Colonic mucosa (tissue), 4 donors: ENCODE measurements at regions of chr11 and their contacts with region 1.

Region 1: GRCh38 chr11:109486129-109486528 is 64.1 kb downstream of the C11orf87 start:
- DNase-seq: no peak
- H3K4me3 ChIP-seq: no peak overlapping the region
- H3K27ac ChIP-seq: no peak overlapping the region
- H3K4me1 ChIP-seq: no peaks in the 10 kb centered on the region
- H3K27me3 ChIP-seq: no peaks in the 10 kb centered on the region
- CTCF ChIP-seq: no peak

Region 2: GRCh38 chr11:109378034-109378433 is 108.1 kb before region 1 on chr11:
- intact Hi-C with region 1: no loop called
- DNase-seq: no peak
- H3K4me3 ChIP-seq: no peak overlapping the region
- H3K27ac ChIP-seq: no peak overlapping the region
- H3K4me1 ChIP-seq: no peaks in the 10 kb centered on the region
- H3K27me3 ChIP-seq: no peaks in the 10 kb centered on the region
- CTCF ChIP-seq: no peak

Region 3: GRCh38 chr11:109511598-109511997 is 25.5 kb after region 1 on chr11:
- intact Hi-C with region 1: loop called (anchors 2 kb)
- DNase-seq: no peak
- H3K4me3 ChIP-seq: no peak overlapping the region
- H3K27ac ChIP-seq: no peak overlapping the region
- H3K4me1 ChIP-seq: no peaks in the 10 kb centered on the region
- H3K27me3 ChIP-seq: no peaks in the 10 kb centered on the region
- CTCF ChIP-seq: no peak